CD8-positive, alpha-beta T cell (primary cell): ENCODE measurements at regions of chr12 and their contacts with region 1.

Region 1: GRCh38 chr12:110742718-110743570 is at the start of gene PPP1CC:
- DNase-seq: peak; percentile 83 to 97 (median 91)
- ATAC-seq: peak; percentile 94
- H3K4me3 ChIP-seq: peak within 1 kb of the TSS; percentile 63 to 77
- H3K4me3 Mint-ChIP-seq: peak within 1 kb of the TSS; percentile 99
- H3K27ac ChIP-seq: peak within 1 kb of the TSS; percentile 60 to 69
- H3K27ac Mint-ChIP-seq: peak within 1 kb of the TSS; percentile 97
- H3K4me1 ChIP-seq: peaks cover 37% of the 10 kb centered on the region
- H3K4me1 Mint-ChIP-seq: peaks cover 40% of the 10 kb centered on the region
- H3K27me3 ChIP-seq: no peaks in the 10 kb centered on the region
- H3K27me3 Mint-ChIP-seq: no peaks in the 10 kb centered on the region
- CTCF ChIP-seq: no peak
- total RNA-seq, gene PPP1CC: 147 to 158 TPM

Region 2: DNA sequence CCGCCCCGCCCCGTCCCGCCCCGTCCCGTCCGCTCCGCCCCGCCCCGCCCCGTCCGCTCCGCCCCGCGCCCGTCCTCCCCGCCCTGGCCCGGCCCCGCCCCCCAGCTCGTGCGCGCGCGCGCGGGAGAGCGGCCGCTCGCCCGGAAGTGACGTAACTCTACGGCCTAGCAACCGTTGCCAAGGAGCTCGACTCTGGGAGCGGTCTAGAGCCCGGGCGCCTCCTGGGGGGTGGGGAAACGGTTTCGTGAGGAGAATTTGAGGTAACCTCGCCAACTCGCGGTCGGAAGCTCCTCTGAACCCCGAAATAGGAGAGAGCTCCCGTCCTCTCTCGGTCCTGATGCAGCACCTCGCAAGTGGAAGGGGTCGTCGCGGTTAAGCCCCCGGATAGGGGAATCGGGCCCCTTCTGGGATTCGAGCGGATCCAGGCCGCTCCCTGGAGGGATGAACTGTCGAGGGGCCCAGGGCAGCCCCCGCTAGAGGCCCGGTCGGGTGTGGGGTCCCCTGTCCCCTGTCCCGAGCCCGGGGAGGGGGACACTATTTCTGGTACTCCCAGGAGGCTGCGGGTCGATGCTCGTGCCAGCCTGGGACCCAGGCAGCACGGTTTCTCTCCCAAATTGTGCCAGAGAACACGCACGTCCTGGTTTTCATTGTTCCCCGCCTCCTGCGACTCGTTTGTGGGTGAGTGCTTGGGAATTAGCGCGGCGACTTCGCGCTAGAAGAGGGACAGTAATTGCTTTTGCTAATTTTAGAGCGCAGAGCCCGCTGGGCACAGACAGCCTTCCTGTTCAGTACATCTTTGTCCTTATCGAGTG is 618.6 kb before region 1 on chr12 and contains the start of gene IFT81:
- CTCF ChIA-PET with region 1: no interaction called
- POLR2A ChIA-PET with region 1: no interaction called
- intact Hi-C with region 1: loop called (anchors 5 to 10 kb)
- DNase-seq: peak; percentile 94 to 99 (median 96)
- ATAC-seq: peak; percentile 95
- H3K4me3 ChIP-seq: peak within 1 kb of the TSS; percentile 69 to 96
- H3K4me3 Mint-ChIP-seq: peak within 1 kb of the TSS; percentile 91
- H3K27ac ChIP-seq: peak within 1 kb of the TSS; percentile 60 to 73
- H3K27ac Mint-ChIP-seq: peak within 1 kb of the TSS; percentile 83
- H3K4me1 ChIP-seq: peaks cover 10% of the 10 kb centered on the region
- H3K4me1 Mint-ChIP-seq: peaks cover 8% of the 10 kb centered on the region
- H3K27me3 ChIP-seq: no peaks in the 10 kb centered on the region
- H3K27me3 Mint-ChIP-seq: peaks cover 3% of the 10 kb centered on the region
- CTCF ChIP-seq: no peak
- total RNA-seq, gene IFT81: 0.25 to 0.43 TPM

Region 3: DNA sequence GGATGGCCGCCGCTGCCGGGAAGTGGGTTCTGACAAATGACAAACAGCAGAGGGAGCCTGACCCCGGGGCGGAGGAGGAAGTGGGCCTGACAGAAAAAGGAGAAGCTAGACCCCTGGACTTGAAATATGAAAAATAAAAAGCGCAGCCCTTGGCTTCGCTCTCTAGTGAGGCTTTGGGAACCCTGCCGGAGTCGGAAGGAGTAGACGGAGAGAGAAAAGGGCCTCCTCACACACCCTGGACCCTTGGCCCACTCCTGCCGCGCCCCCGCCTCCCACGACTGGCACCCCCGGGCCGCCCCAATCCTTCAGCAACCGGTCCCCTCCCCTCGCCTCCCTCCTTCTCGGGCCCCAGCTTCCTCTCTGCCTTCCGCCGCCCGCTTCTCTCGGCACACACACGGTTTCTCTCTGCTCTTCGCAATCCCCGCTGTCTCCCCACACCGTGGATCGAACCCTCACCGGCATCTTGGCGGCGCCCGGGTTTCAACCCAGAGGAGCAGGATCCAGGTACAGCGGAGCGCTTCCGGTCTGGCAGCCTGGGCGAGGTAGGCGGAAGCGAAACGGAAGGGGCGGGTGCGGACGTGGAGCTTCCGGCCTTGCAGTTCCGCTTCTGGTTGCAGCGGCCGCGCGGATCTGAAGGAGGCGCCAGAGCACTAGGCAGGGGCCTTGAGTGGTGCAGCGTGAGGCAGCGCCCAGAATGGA is 293.0 kb before region 1 on chr12 and contains the start of gene ARPC3:
- CTCF ChIA-PET with region 1: interaction called, 4 read pairs
- POLR2A ChIA-PET with region 1: interaction called, 4 read pairs
- intact Hi-C with region 1: loop called (anchors 1 to 5 kb)
- DNase-seq: peak; percentile 91 to 98 (median 95)
- ATAC-seq: peak; percentile 95
- H3K4me3 ChIP-seq: peak within 1 kb of the TSS; percentile 80 to 95
- H3K4me3 Mint-ChIP-seq: peak within 1 kb of the TSS; percentile 100
- H3K27ac ChIP-seq: peak within 1 kb of the TSS; percentile 93 to 98
- H3K27ac Mint-ChIP-seq: peak within 1 kb of the TSS; percentile 100
- H3K4me1 ChIP-seq: peaks cover 31% of the 10 kb centered on the region
- H3K4me1 Mint-ChIP-seq: peaks cover 35% of the 10 kb centered on the region
- H3K27me3 ChIP-seq: no peaks in the 10 kb centered on the region
- H3K27me3 Mint-ChIP-seq: no peaks in the 10 kb centered on the region
- CTCF ChIP-seq: peak; percentile 76
- total RNA-seq, gene ARPC3: 123 to 136 TPM

Region 4: DNA sequence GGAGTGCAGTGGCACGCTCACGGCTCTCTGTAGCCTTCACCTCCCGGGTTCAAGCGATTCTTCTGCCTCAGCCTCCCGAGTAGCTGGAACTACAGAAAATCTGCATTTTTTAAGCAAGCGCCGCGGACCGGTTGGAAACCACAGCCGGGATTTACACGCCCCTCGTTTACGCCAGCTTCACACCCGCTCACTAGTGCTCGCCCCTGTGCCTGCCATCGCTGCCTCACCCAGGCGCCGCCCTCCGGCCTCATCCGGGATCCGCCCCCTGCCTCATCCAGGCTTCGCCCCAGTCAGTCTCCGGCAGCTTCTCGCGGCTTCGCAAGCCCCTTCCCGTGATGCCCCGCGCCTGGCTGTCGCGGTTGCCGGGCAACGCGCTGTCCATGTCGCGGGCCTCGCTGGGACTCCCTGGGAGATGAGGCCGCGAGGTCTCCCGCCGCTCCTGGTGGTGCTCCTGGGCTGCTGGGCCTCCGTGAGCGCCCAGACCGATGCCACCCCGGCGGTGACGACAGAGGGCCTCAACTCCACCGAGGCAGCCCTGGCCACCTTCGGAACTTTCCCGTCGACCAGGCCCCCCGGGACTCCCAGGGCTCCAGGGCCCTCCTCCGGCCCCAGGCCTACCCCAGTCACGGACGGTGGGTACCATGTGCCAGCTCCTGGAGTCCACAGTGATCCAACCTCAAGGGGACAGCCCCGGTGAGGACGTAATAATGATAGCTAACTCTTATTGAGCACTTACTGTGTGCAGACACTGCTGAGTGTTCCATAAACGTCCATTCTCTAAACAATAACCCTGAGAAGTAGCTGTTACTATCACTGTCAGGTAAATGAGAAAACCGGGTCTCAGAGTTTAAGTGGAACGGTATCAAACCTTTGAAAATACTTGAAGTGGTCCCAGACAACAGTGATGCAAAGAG is 128.9 kb before region 1 on chr12 and contains the start of gene TCTN1:
- CTCF ChIA-PET with region 1: no interaction called
- POLR2A ChIA-PET with region 1: interaction called, 4 read pairs
- intact Hi-C with region 1: loop called (anchors 2 kb)
- DNase-seq: peak; percentile 90 to 97 (median 95)
- ATAC-seq: peak; percentile 100
- H3K4me3 ChIP-seq: peak within 1 kb of the TSS; percentile 75 to 76
- H3K4me3 Mint-ChIP-seq: peak within 1 kb of the TSS; percentile 88
- H3K27ac ChIP-seq: peak within 1 kb of the TSS; percentile 78 to 83
- H3K27ac Mint-ChIP-seq: peak within 1 kb of the TSS; percentile 85
- H3K4me1 ChIP-seq: peaks cover 5% of the 10 kb centered on the region
- H3K4me1 Mint-ChIP-seq: peaks cover 7% of the 10 kb centered on the region
- H3K27me3 ChIP-seq: no peaks in the 10 kb centered on the region
- H3K27me3 Mint-ChIP-seq: no peaks in the 10 kb centered on the region
- CTCF ChIP-seq: no peak
- total RNA-seq, gene TCTN1: 4.7 to 4.9 TPM

Region 5: GRCh38 chr12:110826592-110827200 is 83.8 kb after region 1 on chr12:
- CTCF ChIA-PET with region 1: no interaction called
- POLR2A ChIA-PET with region 1: no interaction called
- intact Hi-C with region 1: loop called in 1 of 2 experiments (anchors 5 kb)
- DNase-seq: peak; percentile 64 to 85 (median 78)
- ATAC-seq: peak; percentile 95
- H3K4me3 ChIP-seq: no peak overlapping the region
- H3K4me3 Mint-ChIP-seq: peak overlapping the region; percentile 65
- H3K27ac ChIP-seq: no peak overlapping the region
- H3K27ac Mint-ChIP-seq: no peak overlapping the region
- H3K4me1 ChIP-seq: no peaks in the 10 kb centered on the region
- H3K4me1 Mint-ChIP-seq: peaks cover 5% of the 10 kb centered on the region
- H3K27me3 ChIP-seq: no peaks in the 10 kb centered on the region
- H3K27me3 Mint-ChIP-seq: peaks cover 9% of the 10 kb centered on the region
- CTCF ChIP-seq: peak; percentile 80

Region 6: GRCh38 chr12:111841750-111842555 is 1099.0 kb after region 1 on chr12 and contains the start of gene MAPKAPK5:
- CTCF ChIA-PET with region 1: no interaction called
- POLR2A ChIA-PET with region 1: no interaction called
- intact Hi-C with region 1: loop called in 1 of 2 experiments (anchors 5 kb)
- DNase-seq: peak; percentile 96 to 100 (median 98)
- ATAC-seq: peak; percentile 87
- H3K4me3 ChIP-seq: peak within 1 kb of the TSS; percentile 79 to 91
- H3K4me3 Mint-ChIP-seq: peak within 1 kb of the TSS; percentile 98
- H3K27ac ChIP-seq: peak within 1 kb of the TSS; percentile 82 to 91
- H3K27ac Mint-ChIP-seq: peak within 1 kb of the TSS; percentile 99
- H3K4me1 ChIP-seq: peaks cover 42% of the 10 kb centered on the region
- H3K4me1 Mint-ChIP-seq: peaks cover 64% of the 10 kb centered on the region
- H3K27me3 ChIP-seq: no peaks in the 10 kb centered on the region
- H3K27me3 Mint-ChIP-seq: no peaks in the 10 kb centered on the region
- CTCF ChIP-seq: no peak
- total RNA-seq, gene MAPKAPK5: 65.6 to 68.0 TPM